ENCODE measurements at regions of chr10 and their contacts with region 1.

Region 1: DNA sequence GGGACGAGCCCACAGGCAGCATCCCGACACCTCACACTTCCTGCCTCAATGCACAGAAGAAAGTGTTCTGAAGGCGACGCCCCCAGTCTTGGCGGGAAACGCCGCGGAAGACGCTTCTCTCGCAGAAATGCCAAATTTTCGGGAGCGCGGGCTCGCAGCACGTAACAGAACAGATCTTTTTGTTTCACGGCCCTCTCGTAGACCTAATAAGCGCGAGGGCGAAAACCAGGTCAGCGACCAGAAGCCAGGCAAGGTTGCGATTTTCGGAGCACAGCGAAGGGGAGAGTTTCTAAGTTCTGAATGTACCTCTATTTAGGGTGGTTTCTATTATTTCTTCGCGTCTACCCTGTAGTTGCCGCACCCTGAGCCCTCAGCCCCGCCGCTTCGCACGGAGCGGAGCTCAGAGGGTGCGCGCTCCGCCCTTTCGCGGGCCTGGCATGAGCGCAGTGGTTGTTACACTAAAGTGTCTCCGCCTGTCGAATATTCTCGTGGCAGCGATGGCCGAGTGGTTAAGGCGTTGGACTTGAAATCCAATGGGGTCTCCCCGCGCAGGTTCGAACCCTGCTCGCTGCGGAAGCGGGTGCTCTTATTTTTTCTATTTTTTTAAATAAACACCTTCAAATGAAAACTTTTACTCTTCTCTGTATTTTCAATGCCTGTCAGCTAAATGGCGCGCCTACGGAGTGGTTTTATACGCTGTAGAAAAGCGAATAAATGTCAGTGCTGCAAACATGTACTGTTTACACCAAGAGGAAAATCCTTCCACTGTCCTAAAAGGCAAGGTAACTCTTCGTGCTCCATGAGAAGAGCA is 68.2 kb upstream of the CTNNA3 start:
- DNase-seq: peak; percentile 91
- ATAC-seq: peak; percentile 95 to 97

Region 2: DNA sequence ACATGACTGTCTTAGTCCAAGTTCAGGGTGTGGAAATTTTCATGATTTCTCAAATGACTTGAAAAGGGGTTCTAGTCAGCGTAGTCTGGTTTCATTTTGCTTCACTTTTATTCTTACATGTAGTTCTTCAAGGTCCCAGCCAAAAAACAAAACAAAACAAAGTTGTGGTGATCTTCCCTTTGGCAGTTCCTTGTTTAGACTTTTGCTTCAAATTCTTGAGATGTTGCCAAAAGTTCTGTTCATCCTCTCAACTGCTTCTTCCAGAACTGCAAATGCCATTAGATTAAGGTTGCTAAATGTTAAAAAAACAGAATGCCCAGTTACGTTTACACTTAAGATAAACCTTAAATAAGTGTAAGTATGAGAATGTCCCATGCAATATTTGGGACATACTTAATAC is 1209.2 kb before region 1 on chr10:
- intact Hi-C with region 1: no loop called
- DNase-seq: no peak
- ATAC-seq: no peak

Region 3: DNA sequence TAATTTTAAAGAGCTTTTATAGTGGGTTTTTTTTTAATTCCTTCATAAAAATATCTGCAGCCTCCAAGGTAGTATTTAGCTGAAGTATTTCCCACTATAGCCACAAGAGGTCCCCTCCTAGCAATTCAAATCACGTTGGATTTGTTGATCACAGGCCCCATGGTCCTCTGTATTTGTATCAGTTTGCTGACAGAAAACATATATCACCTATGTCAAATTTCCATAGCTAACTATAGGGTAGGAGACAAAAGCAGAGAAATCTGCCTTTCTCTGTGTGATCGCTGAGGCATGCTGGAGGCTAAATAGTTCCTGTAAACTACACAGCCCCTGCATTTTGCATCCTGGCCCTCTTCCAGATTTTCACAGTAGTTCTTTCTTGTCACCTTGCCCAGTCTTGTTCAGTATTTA is 66.5 kb before region 1 on chr10:
- intact Hi-C with region 1: loop called in 1 of 2 experiments (anchors 10 kb)
- DNase-seq: no peak
- ATAC-seq: peak; percentile 70 to 80